Right ventricle myocardium superior (tissue), 1 donor: ENCODE measurements at regions of chr16 and their contacts with region 1.

Region 1: DNA sequence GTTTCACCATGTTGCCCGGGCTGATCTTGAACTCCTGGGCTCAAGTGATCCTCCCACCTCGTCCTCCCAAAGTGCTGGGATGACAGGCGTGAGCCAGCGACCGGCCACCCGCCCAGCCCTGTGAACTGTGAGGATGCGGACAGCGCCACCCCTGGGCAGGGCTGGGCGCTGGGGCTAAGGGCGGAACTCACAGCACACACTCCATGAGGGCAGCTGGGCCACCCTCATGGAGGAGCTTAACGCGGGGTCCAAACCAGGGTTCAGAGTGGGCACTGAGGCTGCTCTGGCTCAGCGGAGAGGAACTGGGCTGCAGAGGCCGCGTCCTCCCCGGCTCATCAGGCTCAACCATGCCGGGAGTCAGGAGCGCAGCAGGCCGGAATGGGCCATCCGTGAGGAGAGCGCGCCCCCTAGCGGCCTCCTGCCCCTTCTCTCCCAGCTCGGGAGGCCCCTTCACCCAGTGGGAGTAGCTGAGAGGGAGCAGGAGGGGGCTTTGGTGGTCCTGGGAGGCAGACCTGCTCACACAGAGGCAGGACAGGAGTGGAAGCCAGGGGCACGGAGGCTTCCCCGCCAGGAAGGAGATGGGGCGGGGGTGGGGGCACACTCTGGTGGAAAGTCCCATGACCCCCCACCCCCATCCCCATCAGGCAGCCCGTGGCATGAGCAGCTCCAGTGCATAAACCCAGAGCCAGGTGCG is 13.8 kb downstream of the CORO7 start:
- DNase-seq: peak; percentile 91
- ATAC-seq: peak; percentile 95

Region 2: DNA sequence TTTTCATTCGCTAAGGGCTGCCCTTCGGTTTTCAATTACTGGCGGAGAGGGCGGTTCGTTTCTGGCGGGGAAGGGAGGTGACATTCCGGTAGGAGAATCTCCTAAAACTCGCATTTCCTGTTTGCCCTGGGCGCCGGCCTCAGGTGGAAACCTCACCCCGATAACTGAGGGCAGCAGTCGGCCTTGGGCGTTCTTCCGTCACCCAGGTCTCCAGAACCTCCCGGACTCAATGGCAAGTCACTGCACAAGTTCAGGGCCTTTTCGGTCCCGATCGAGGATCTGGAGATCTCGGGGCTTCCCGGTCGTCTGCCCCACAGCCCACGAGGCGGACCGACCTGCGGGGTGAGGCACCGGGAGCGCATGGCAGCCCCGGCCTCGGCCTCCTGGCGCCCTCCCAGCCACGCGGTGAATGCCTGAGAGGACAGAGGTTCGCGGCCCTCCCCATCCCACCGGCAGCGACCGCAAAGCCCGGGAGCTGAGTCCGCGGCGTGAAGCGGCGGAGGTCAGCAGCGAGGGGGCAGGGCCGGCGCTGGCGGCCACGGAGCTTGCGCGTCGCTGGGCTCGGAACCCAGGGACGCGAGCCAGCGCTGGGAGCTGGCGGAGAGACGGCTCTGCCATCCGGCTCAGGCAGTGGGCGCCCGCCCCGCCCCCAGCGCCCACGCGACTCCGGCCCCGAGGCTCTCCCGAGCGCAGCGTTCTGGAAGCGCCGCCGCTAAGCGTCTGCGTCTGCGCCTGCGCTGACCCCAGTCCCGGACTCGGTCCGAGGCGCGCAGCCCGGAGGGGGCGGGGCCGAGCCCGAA is 219.1 kb before region 1 on chr16:
- intact Hi-C with region 1: no loop called
- DNase-seq: peak; percentile 95
- ATAC-seq: peak; percentile 97

Region 3: DNA sequence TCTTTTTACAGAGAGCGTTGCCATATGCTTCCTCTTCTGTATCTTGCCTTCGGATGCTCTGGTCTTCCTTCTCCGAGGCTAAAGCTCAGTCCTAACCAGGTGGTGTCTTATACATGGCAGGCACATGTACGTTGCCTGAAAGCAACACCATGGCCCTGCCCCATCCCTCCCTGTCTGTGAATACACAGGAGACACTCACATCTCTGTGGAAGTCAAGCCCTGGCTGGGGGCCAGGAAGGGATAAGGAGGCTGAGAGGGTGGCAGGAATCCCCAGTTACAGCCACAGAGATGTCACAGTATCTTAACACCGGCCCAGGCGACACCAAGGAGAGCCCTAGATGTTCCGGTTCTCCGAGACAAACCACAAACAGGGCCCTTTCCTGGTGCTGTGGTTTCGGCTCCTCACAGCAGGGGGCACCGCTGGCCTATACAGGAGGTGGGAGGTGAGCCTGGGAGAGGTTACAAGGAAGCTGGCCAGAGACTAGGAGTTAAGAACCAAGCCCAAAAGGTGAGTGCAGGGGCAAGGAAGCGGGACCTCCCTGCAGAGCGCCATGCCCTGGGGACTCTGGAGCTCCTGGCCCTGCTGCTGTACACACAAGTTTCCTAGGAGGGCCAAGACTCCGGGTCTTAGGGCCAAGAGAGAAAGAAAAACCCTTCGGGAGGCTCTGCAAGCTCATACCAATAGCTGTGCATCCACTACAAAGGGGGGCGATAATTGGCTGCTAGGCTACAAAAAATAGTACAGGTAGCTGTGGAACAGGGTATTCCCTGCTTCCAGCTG is 202.4 kb before region 1 on chr16:
- intact Hi-C with region 1: loop called (anchors 10 kb)
- DNase-seq: peak; percentile 77
- ATAC-seq: peak; percentile 74

Region 4: DNA sequence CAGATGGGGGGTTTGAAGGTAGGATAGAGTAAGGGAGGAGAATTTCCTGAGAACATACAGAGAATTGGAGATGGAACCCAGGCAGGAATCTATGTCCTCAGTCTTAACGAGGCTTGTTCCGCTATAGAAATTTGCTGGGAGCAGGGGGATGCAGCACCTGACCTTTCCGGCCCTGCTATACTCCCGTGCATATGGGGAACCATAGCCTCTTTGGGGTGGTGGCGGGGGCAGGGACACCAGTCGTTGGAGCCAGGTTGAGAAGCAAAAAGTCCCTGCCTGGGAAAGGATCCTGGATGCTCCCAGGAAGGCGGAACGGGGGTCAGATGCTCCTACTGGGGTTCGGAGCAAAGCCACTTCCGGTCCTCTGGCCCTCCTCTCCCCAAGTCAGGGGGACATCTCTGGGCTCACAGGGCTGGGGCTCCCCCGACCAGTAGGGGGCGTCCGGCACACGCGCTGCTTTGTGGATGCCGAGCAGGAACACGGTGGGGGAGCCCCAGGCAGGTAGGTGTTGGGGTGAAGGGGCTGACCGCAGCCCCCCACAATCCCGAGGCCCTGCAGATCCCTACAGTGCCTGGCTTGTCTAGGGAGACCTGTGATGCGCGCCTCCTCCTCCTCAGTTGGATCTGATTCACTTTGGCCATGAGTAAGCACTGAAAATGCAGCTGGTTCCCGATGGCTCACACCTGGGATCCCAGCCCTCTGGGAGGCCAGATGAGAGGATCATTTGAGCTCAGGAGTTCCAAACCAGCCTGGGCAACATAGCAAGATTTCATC is 114.3 kb before region 1 on chr16:
- intact Hi-C with region 1: loop called (anchors 5 kb)
- DNase-seq: peak; percentile 86
- ATAC-seq: peak; percentile 86

Region 5: GRCh38 chr16:4358831-4359561 is 43.6 kb before region 1 on chr16:
- intact Hi-C with region 1: loop called (anchors 2 kb)
- DNase-seq: peak; percentile 83
- ATAC-seq: peak; percentile 77